ENCODE measurements at regions of chr12 and their contacts with region 1.

Region 1: GRCh38 chr12:107317751-107318613 is 224.6 kb upstream of the CRY1 start:
- DNase-seq: peak; percentile 67 to 90 (median 80)
- H3K4me3 ChIP-seq: peak overlapping the region; percentile 93
- H3K4me3 Mint-ChIP-seq: peak overlapping the region; percentile 78 to 92 (median 84)
- H3K27ac ChIP-seq: no peak overlapping the region
- H3K27ac Mint-ChIP-seq: peak overlapping the region in 7 of 8 donors; percentile 47 to 90 (median 78)
- H3K4me1 ChIP-seq: peaks cover 18% of the 10 kb centered on the region
- H3K4me1 Mint-ChIP-seq: peaks cover 33 to 40% (median 39%) of the 10 kb centered on the region in 3 donors
- H3K27me3 ChIP-seq: no peaks in the 10 kb centered on the region
- H3K27me3 Mint-ChIP-seq: peaks cover 10 to 11% of the 10 kb centered on the region in 2 donors

Region 2: DNA sequence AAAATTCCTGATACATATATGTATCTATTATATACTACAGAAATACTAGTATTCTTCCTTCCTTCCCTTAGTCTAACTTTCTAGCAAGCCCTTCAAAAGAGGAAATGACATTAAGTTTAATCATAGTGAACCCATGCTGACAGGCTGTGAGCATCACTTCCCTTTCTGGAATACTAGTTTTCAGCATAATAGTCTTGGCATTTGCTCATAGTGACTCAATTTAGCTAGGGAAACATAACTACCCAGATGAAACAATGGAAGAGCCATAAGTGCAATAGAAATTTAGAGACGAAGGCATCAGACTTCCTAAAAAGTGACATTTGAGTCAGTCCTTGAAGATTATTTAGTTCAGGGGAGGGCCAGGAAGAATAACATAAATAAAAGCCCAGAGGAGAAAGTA is 40.1 kb before region 1 on chr12:
- CTCF ChIA-PET with region 1: no interaction called
- POLR2A ChIA-PET with region 1: no interaction called
- DNase-seq: no peak
- H3K4me3 ChIP-seq: no peak overlapping the region
- H3K4me3 Mint-ChIP-seq: no peak overlapping the region
- H3K27ac ChIP-seq: no peak overlapping the region
- H3K27ac Mint-ChIP-seq: no peak overlapping the region
- H3K4me1 ChIP-seq: no peaks in the 10 kb centered on the region
- H3K4me1 Mint-ChIP-seq: no peaks in the 10 kb centered on the region
- H3K27me3 ChIP-seq: no peaks in the 10 kb centered on the region
- H3K27me3 Mint-ChIP-seq: peaks cover 0 to 10% of the 10 kb centered on the region in 2 donors

Region 3: GRCh38 chr12:107288414-107289127 is 29.4 kb before region 1 on chr12:
- CTCF ChIA-PET with region 1: no interaction called
- POLR2A ChIA-PET with region 1: no interaction called
- DNase-seq: no peak
- H3K4me3 ChIP-seq: no peak overlapping the region
- H3K4me3 Mint-ChIP-seq: peak overlapping the region in 1 of 7 donors; percentile 5
- H3K27ac ChIP-seq: no peak overlapping the region
- H3K27ac Mint-ChIP-seq: peak overlapping the region in 1 of 8 donors; percentile 81
- H3K4me1 ChIP-seq: no peaks in the 10 kb centered on the region
- H3K4me1 Mint-ChIP-seq: peaks cover 8 to 17% (median 11%) of the 10 kb centered on the region in 3 donors
- H3K27me3 ChIP-seq: no peaks in the 10 kb centered on the region
- H3K27me3 Mint-ChIP-seq: peaks cover 0 to 2% of the 10 kb centered on the region in 2 donors

Region 4: GRCh38 chr12:107372229-107372658 is 54.3 kb after region 1 on chr12:
- CTCF ChIA-PET with region 1: interaction called, 4 read pairs
- POLR2A ChIA-PET with region 1: interaction called, 20 read pairs
- DNase-seq: peak in 4 of 5 donors; percentile 30 to 69 (median 57)
- H3K4me3 ChIP-seq: peak overlapping the region; percentile 28
- H3K4me3 Mint-ChIP-seq: peak overlapping the region; percentile 52 to 79 (median 70)
- H3K27ac ChIP-seq: peak overlapping the region; percentile 5
- H3K27ac Mint-ChIP-seq: peak overlapping the region; percentile 48 to 97 (median 94)
- H3K4me1 ChIP-seq: peaks cover 71% of the 10 kb centered on the region
- H3K4me1 Mint-ChIP-seq: peaks cover 72 to 80% (median 75%) of the 10 kb centered on the region in 3 donors
- H3K27me3 ChIP-seq: no peaks in the 10 kb centered on the region
- H3K27me3 Mint-ChIP-seq: peaks cover 0 to 1% of the 10 kb centered on the region in 2 donors

Region 5: GRCh38 chr12:107402041-107403022 is 84.3 kb after region 1 on chr12:
- CTCF ChIA-PET with region 1: interaction called, 26 read pairs
- POLR2A ChIA-PET with region 1: no interaction called
- DNase-seq: peak; percentile 17 to 65 (median 37)
- H3K4me3 ChIP-seq: no peak overlapping the region
- H3K4me3 Mint-ChIP-seq: no peak overlapping the region
- H3K27ac ChIP-seq: no peak overlapping the region
- H3K27ac Mint-ChIP-seq: peak overlapping the region in 7 of 8 donors; percentile 2 to 86 (median 61)
- H3K4me1 ChIP-seq: peaks cover 7% of the 10 kb centered on the region
- H3K4me1 Mint-ChIP-seq: peaks cover 6 to 19% (median 16%) of the 10 kb centered on the region in 3 donors
- H3K27me3 ChIP-seq: no peaks in the 10 kb centered on the region
- H3K27me3 Mint-ChIP-seq: peaks cover 0 to 2% of the 10 kb centered on the region in 2 donors